Naive thymus-derived CD8-positive, alpha-beta T cell (primary cell): ENCODE measurements at regions of chr7 and their contacts with region 1.

Region 1: DNA sequence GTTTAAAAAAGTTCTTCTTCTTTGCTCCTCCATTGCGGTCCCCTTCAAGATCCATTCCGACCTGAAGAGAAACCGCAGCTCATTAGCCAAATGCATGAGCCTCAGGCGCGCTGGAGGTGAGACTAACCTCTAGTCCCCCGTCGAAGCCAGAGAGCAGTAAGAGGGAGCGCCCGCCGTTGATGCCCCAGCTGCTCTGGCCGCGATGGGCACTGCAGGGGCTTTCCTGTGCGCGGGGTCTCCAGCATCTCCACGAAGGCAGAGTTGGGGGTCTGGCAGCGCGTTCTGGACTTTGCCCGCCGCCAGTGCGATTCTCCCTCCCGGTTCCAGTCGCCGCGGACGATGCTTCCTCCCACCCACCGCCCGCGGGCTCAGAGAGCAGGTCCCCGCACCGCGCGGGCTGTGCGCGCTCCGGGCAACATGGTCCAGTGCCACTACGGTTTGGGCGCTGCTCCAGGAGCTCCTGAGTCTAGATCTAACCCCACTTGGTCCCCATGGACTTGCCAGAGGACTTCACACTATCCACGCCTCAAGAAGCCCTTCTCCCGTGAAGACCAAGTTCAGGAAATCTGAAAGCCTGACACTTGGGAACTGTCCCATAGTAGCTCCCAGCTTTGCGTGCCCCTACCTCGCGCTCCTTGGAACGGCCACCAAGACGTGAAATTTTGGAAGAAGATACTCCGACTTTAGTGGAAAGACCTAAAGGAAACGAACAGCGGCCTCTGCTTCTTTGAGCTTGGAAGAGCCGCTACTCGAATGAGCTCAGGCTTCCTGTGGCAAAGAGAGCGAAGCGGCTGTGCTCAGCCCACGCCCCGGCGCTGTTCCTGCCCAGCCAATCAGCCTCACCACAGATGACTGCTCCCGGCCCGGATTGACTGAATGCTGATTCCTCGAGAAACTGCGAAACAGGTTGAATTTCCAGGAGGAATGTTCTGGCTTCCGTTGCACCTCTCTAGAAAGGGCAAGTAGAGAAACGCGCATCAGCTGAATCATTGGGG is at the start of gene ABCB1:
- DNase-seq: peak; percentile 37 to 78 (median 52)
- ATAC-seq: peak; percentile 89 to 90
- H3K4me3 Mint-ChIP-seq: peak within 1 kb of the TSS; percentile 79 to 96 (median 85)
- H3K27ac Mint-ChIP-seq: peak within 1 kb of the TSS; percentile 50 to 94 (median 88)
- H3K4me1 Mint-ChIP-seq: peaks cover 11 to 47% (median 34%) of the 10 kb centered on the region in 4 donors
- H3K27me3 Mint-ChIP-seq: peaks cover 0 to 16% (median 0%) of the 10 kb centered on the region in 5 donors
- polyA plus RNA-seq, gene ABCB1: 25.3 to 34.7 (median 31.7) TPM

Region 2: DNA sequence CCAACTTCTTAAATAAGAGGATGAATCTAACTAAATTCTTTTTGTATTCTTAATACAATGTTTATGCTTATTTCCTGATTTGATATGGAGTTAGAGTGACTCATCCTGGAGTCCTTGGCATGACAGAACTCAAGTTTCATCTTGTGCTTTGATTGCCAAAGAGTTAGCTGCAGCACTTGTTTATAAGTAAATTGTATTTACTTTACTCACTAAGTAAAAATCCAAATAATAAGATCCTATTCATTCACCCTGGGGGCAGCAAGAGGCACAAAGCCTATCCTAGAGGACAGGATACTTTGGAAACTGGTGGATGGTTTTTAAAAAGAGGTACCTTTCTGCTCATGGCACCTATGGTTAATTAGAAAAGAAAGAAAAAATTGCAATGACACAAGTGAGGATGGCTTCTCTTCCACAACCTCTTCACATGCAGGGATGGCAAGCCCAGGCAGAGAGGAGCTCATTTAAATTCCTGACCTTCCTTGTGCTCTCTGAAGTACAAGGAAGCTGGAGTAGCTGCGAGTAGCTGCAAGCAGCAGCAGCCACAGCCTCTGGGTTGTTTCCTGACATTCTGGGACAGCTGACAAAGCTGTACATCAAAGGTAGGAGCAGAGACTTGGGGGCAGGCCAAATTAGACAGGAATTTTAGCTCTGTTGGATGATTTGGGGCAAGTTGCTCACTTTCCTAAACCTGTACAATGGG is 283.4 kb before region 1 on chr7:
- POLR2A ChIA-PET with region 1: no interaction called
- DNase-seq: no peak
- ATAC-seq: no peak
- H3K4me3 Mint-ChIP-seq: no peak overlapping the region
- H3K27ac Mint-ChIP-seq: peak overlapping the region in 4 of 10 donors; percentile 24 to 65 (median 30)
- H3K4me1 Mint-ChIP-seq: peaks cover 0 to 22% (median 3%) of the 10 kb centered on the region in 4 donors
- H3K27me3 Mint-ChIP-seq: peaks cover 0 to 2% (median 0%) of the 10 kb centered on the region in 5 donors

Region 3: DNA sequence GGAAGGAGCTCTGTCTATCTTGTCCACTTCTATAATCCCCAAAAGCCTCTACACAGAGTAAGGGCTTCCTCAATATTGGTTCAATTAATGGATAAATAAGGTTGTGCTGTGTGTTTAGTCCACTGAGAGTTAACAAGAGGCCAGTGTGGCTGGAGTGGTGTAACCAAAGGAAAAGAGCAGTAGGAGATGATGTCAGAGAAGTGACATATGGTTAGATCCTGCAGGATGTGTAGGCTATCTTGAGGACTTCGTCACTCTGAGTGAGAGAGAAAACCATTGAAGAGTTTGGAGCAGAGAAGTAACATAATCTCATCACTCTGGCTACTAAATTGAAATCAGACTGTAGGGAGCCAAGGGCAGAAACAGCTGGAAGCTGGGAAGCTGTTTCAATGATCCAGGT is 14.8 kb after region 1 on chr7:
- POLR2A ChIA-PET with region 1: no interaction called
- DNase-seq: no peak
- ATAC-seq: no peak
- H3K4me3 Mint-ChIP-seq: no peak overlapping the region
- H3K27ac Mint-ChIP-seq: no peak overlapping the region
- H3K4me1 Mint-ChIP-seq: peaks cover 0 to 3% (median 0%) of the 10 kb centered on the region in 4 donors
- H3K27me3 Mint-ChIP-seq: peaks cover 8 to 25% (median 14%) of the 10 kb centered on the region in 5 donors

Region 4: DNA sequence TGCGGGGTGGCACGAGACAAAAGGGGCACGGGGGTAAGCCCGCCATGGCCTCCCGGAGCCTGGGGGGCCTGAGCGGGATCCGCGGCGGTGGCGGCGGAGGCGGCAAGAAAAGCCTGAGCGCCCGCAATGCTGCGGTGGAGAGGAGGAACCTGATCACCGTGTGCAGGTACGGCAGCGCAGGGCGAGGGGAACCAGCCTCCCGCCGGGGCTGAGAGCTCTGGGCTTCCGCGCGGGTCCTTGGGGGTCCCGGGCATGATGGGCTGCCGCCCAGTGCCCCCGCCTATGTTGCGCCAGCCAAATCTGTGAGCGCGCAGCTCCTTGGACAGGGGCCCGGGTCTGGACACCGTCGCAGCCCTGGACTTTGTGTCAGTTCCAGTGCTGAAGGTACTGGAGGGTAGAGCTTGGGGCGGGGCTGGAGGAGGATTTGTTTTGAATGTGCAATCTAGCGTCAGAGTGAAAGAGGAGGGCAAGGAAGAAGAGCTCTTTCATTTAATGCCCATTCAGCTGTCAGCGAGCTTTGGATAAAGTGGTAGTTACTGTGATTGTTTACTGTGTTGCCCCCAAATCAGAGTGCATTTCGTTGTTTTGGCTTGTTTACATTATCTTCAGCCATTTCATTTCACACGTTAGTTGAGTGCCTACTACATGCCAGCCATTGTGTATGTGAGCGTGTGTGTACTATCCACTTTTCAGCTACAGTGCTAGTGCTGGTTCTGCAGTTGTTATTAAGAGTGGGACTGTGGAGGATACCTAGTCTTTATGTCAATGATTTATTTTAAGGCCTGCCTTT is 28.5 kb after region 1 on chr7:
- POLR2A ChIA-PET with region 1: interaction called, 30 read pairs
- DNase-seq: peak in 8 of 10 donors; percentile 16 to 66 (median 36)
- ATAC-seq: peak; percentile 35
- H3K4me3 Mint-ChIP-seq: peak overlapping the region; percentile 82 to 96 (median 90)
- H3K27ac Mint-ChIP-seq: peak overlapping the region in 9 of 10 donors; percentile 7 to 94 (median 80)
- H3K4me1 Mint-ChIP-seq: peaks cover 9 to 13% (median 11%) of the 10 kb centered on the region in 4 donors
- H3K27me3 Mint-ChIP-seq: peaks cover 0 to 12% (median 0%) of the 10 kb centered on the region in 5 donors